ENCODE measurements at regions of chr19 and their contacts with region 1.

Region 1: GRCh38 chr19:1074544-1075283 is 7.7 kb downstream of the ARHGAP45 start:
- DNase-seq: peak; percentile 92 to 98 (median 94)
- H3K4me3 ChIP-seq: peak overlapping the region; percentile 34
- H3K4me3 Mint-ChIP-seq: peak overlapping the region in 6 of 7 donors; percentile 63 to 95 (median 74)
- H3K27ac ChIP-seq: peak overlapping the region; percentile 43
- H3K27ac Mint-ChIP-seq: peak overlapping the region; percentile 66 to 100 (median 96)
- H3K4me1 ChIP-seq: peaks cover 80% of the 10 kb centered on the region
- H3K4me1 Mint-ChIP-seq: peaks cover 38 to 65% (median 47%) of the 10 kb centered on the region in 3 donors
- H3K27me3 ChIP-seq: no peaks in the 10 kb centered on the region
- H3K27me3 Mint-ChIP-seq: peaks cover 0 to 6% of the 10 kb centered on the region in 2 donors

Region 2: GRCh38 chr19:1020868-1021425 is 53.8 kb before region 1 on chr19 and contains the start of gene TMEM259:
- CTCF ChIA-PET with region 1: interaction called, 4 read pairs
- POLR2A ChIA-PET with region 1: interaction called, 143 read pairs
- DNase-seq: peak; percentile 96 to 99 (median 98)
- H3K4me3 ChIP-seq: peak within 1 kb of the TSS; percentile 71
- H3K4me3 Mint-ChIP-seq: peak within 1 kb of the TSS; percentile 76 to 95 (median 89)
- H3K27ac ChIP-seq: peak within 1 kb of the TSS; percentile 97
- H3K27ac Mint-ChIP-seq: peak within 1 kb of the TSS; percentile 98 to 100 (median 99)
- H3K4me1 ChIP-seq: peaks cover 59% of the 10 kb centered on the region
- H3K4me1 Mint-ChIP-seq: peaks cover 24 to 60% (median 44%) of the 10 kb centered on the region in 3 donors
- H3K27me3 ChIP-seq: no peaks in the 10 kb centered on the region
- H3K27me3 Mint-ChIP-seq: peaks cover 0 to 6% of the 10 kb centered on the region in 2 donors
- total RNA-seq, gene TMEM259: 151 to 157 TPM

Region 3: GRCh38 chr19:1026189-1027019 is 48.3 kb before region 1 on chr19 and contains the start of gene CNN2:
- CTCF ChIA-PET with region 1: interaction called, 8 read pairs
- POLR2A ChIA-PET with region 1: interaction called, 143 read pairs
- DNase-seq: peak; percentile 58 to 71 (median 68)
- H3K4me3 ChIP-seq: peak within 1 kb of the TSS; percentile 92
- H3K4me3 Mint-ChIP-seq: peak within 1 kb of the TSS; percentile 95 to 99 (median 98)
- H3K27ac ChIP-seq: peak within 1 kb of the TSS; percentile 89
- H3K27ac Mint-ChIP-seq: peak within 1 kb of the TSS; percentile 82 to 99 (median 96)
- H3K4me1 ChIP-seq: peaks cover 38% of the 10 kb centered on the region
- H3K4me1 Mint-ChIP-seq: peaks cover 26 to 45% (median 32%) of the 10 kb centered on the region in 3 donors
- H3K27me3 ChIP-seq: no peaks in the 10 kb centered on the region
- H3K27me3 Mint-ChIP-seq: peaks cover 0 to 6% of the 10 kb centered on the region in 2 donors
- total RNA-seq, gene CNN2: 78.1 to 78.9 TPM

Region 4: DNA sequence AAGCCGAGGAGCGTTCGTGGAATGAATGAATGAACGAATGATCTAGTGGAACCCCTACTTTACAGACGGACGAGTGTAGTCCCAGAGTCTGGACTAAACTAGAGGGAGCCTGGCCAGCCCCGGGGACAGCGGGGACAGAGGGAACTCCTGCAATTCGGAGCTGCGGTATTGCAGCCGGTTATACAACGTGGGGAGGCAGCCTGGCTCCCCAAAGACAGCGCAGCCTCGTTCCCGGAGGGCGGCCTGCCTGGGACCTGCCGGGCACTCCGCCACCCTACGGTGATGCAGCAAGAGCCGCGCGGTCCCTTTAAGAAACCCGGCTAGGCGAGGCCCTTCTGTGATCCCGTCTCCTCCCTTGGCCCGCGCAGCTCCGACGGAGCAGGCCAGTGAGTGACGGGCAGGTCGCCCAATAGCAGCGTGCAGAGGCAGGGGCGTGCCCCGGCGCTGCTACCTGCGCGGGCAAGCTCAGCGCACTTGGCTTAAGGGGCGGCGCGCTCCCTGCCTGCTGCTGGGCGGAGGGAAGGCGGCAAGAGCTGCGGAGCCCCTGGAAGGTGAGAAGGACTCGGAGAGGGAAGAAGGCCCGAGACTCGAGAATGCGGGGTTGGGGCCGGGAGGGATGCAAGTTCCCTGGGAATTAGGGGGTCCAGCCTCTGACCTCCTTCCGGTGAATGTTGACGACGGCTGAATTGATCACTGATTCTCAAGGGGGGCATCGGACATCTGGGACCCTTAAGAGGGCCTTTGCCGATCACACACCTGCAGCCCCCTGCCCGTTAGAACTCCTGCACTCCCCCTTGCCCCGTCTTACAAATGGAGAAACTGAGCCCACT is 34.9 kb before region 1 on chr19 and contains the start of gene ABCA7:
- CTCF ChIA-PET with region 1: interaction called, 4 read pairs
- POLR2A ChIA-PET with region 1: interaction called, 22 read pairs
- DNase-seq: peak; percentile 98 to 100 (median 99)
- H3K4me3 ChIP-seq: peak within 1 kb of the TSS; percentile 78
- H3K4me3 Mint-ChIP-seq: peak within 1 kb of the TSS; percentile 94 to 100 (median 99)
- H3K27ac ChIP-seq: peak within 1 kb of the TSS; percentile 72
- H3K27ac Mint-ChIP-seq: peak within 1 kb of the TSS; percentile 86 to 97 (median 92)
- H3K4me1 ChIP-seq: peaks cover 49% of the 10 kb centered on the region
- H3K4me1 Mint-ChIP-seq: peaks cover 41 to 61% (median 46%) of the 10 kb centered on the region in 3 donors
- H3K27me3 ChIP-seq: no peaks in the 10 kb centered on the region
- H3K27me3 Mint-ChIP-seq: peaks cover 0 to 1% of the 10 kb centered on the region in 2 donors
- total RNA-seq, gene ABCA7: 33.8 to 39.5 TPM

Region 5: DNA sequence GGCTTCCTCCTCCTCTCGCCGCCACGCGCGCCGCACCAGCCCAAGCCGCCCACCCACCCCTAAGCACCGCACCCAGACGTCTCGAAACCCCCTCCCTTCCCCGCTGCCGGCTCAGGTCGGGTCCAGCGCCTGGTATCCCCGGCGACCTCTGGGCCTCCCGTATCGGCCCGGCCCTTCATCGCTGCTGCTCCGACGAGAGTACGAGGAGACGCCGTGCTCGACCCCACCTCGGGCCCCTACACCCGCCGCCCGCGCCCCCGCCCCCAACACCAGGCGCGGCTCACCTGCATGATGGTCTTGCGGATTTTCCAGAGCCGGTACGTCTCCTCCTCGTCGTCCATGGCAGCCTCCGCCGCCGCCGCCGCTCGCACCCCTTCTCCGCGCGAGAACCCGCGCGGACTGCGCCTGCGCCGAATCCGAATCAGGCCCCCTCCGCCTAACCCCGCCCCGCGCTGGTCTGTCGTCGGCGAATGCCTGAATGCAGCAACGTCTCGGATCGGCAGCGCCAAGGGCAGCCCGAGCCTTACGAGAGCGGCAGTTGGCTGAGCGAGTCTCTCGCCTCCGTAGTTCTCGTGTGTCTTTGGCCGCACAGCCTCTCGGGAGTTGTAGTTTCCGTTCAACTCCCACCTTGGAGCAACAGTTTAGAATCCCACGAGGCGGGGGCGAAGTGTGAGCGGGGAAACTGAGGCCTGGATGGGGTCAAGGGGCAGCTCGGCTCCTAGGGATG is 20.4 kb after region 1 on chr19 and contains the start of gene POLR2E:
- CTCF ChIA-PET with region 1: interaction called, 135 read pairs
- POLR2A ChIA-PET with region 1: interaction called, 737 read pairs
- DNase-seq: peak; percentile 98 to 99 (median 98)
- H3K4me3 ChIP-seq: peak within 1 kb of the TSS; percentile 84
- H3K4me3 Mint-ChIP-seq: peak within 1 kb of the TSS; percentile 85 to 98 (median 89)
- H3K27ac ChIP-seq: peak within 1 kb of the TSS; percentile 59
- H3K27ac Mint-ChIP-seq: peak within 1 kb of the TSS; percentile 74 to 98 (median 90)
- H3K4me1 ChIP-seq: peaks cover 39% of the 10 kb centered on the region
- H3K4me1 Mint-ChIP-seq: peaks cover 34 to 56% (median 38%) of the 10 kb centered on the region in 3 donors
- H3K27me3 ChIP-seq: no peaks in the 10 kb centered on the region
- H3K27me3 Mint-ChIP-seq: peaks cover 0 to 2% of the 10 kb centered on the region in 2 donors
- total RNA-seq, gene POLR2E: 270 to 278 TPM

Region 6: DNA sequence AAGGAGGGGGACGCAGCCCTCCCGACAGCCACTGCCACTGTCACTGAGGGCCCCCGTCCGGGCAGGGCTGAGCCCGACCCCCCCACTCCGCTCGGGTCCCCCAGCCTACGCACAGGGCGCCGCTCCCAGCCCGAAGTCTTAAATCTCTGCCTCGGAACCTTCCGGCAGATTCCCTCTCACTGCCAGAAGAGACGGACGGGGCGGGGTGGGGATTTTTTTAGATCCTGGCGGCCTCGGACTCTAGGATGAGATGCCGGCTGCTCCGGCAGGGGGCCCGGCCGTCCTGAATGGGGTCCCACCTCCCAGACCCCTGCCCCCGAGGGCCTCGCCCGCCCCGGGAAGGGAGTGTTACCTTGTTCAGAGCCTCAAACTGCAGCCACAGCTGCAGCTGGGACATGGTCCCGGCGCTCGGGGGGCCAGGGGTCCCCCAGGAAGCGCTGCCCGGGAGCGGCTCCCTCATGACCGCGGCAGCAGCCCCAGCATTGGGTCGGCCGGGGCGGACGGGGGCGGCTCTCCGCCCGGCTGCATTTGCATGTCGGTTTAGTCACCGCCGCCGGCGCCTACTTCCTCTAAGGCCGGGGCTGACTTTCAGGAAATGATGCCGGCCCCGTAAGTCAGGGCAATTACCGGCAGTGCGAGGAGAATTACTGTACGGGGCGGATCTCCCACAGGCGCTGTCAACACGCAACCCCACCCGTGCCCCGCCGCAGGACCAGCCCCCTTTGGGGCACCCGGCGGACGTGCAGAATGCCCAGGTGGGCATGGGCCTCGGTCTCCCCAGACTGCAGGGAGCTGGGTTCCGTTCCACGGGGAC is 57.2 kb after region 1 on chr19:
- CTCF ChIA-PET with region 1: no interaction called
- POLR2A ChIA-PET with region 1: interaction called, 10 read pairs
- DNase-seq: peak; percentile 80 to 90 (median 83)
- H3K4me3 ChIP-seq: peak overlapping the region; percentile 84
- H3K4me3 Mint-ChIP-seq: peak overlapping the region; percentile 78 to 92 (median 86)
- H3K27ac ChIP-seq: peak overlapping the region; percentile 87
- H3K27ac Mint-ChIP-seq: peak overlapping the region; percentile 85 to 99 (median 92)
- H3K4me1 ChIP-seq: peaks cover 36% of the 10 kb centered on the region
- H3K4me1 Mint-ChIP-seq: peaks cover 21 to 51% (median 24%) of the 10 kb centered on the region in 3 donors
- H3K27me3 ChIP-seq: no peaks in the 10 kb centered on the region
- H3K27me3 Mint-ChIP-seq: peaks cover 0 to 3% of the 10 kb centered on the region in 2 donors

Region 7: DNA sequence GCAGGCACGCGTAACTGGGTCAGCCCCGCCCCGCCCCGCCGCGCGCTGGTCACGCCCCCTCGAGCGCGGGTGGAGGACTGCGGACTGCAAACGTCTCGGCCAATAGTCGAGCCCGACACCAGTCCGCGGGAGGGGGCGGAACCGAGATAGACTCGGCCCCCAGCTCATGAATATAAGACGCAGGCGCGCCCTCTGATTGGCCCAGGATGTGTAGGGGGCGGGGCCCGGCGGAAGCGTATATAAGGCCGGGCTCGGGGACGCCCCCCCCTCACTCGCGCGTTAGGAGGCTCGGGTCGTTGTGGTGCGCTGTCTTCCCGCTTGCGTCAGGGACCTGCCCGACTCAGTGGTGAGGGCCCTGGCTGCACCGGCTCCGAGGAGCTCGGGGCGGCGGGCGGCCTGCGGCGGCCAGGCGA is 194.4 kb after region 1 on chr19 and contains the start of gene CIRBP:
- CTCF ChIA-PET with region 1: interaction called, 11 read pairs
- POLR2A ChIA-PET with region 1: interaction called, 13 read pairs
- DNase-seq: peak; percentile 98 to 100 (median 99)
- H3K4me3 ChIP-seq: peak within 1 kb of the TSS; percentile 99
- H3K4me3 Mint-ChIP-seq: peak within 1 kb of the TSS; percentile 86 to 92 (median 87)
- H3K27ac ChIP-seq: peak within 1 kb of the TSS; percentile 90
- H3K27ac Mint-ChIP-seq: peak within 1 kb of the TSS; percentile 90 to 98 (median 94)
- H3K4me1 ChIP-seq: peaks cover 75% of the 10 kb centered on the region
- H3K4me1 Mint-ChIP-seq: peaks cover 58 to 83% (median 58%) of the 10 kb centered on the region in 3 donors
- H3K27me3 ChIP-seq: no peaks in the 10 kb centered on the region
- H3K27me3 Mint-ChIP-seq: peaks cover 0 to 10% of the 10 kb centered on the region in 2 donors
- total RNA-seq, gene CIRBP: 253 to 258 TPM

Measured in CD8-positive, alpha-beta memory T cell (primary cell).